HepG2 (cell line): ENCODE measurements at regions of chr7 and their contacts with region 1.

Region 1: GRCh38 chr7:87345166-87345927 is at the start of gene CROT:
- DNase-seq: peak; percentile 91
- ATAC-seq: peak; percentile 99
- H3K4me3 ChIP-seq: peak within 1 kb of the TSS; percentile 79 to 85 (median 81)
- H3K27ac ChIP-seq: peak within 1 kb of the TSS; percentile 73
- H3K4me1 ChIP-seq: peaks cover 44% of the 10 kb centered on the region
- H3K27me3 ChIP-seq: no peaks in the 10 kb centered on the region; a peak in 1 of 5 replicates
- CTCF ChIP-seq: no peak
- EP300 ChIP-seq: no peak
- POLR2A ChIP-seq: peak; percentile 71 to 90
- RAD21 ChIP-seq: no peak; the same call in 1 of the 2 replicates
- total RNA-seq, gene CROT: 11.9 and 13.7 TPM in 2 replicates

Region 2: GRCh38 chr7:86469680-86470295 is 875.6 kb before region 1 on chr7:
- CTCF ChIA-PET with region 1: no interaction called
- POLR2A ChIA-PET with region 1: no interaction called
- in situ Hi-C with region 1: no loop called
- intact Hi-C with region 1: no loop called
- DNase-seq: peak; percentile 70
- ATAC-seq: peak; percentile 95
- H3K4me3 ChIP-seq: no peak overlapping the region
- H3K27ac ChIP-seq: no peak overlapping the region
- H3K4me1 ChIP-seq: no peaks in the 10 kb centered on the region
- H3K27me3 ChIP-seq: no peaks in the 10 kb centered on the region
- CTCF ChIP-seq: peak; percentile 87
- EP300 ChIP-seq: no peak
- POLR2A ChIP-seq: no peak
- RAD21 ChIP-seq: peak; percentile 63

Region 3: DNA sequence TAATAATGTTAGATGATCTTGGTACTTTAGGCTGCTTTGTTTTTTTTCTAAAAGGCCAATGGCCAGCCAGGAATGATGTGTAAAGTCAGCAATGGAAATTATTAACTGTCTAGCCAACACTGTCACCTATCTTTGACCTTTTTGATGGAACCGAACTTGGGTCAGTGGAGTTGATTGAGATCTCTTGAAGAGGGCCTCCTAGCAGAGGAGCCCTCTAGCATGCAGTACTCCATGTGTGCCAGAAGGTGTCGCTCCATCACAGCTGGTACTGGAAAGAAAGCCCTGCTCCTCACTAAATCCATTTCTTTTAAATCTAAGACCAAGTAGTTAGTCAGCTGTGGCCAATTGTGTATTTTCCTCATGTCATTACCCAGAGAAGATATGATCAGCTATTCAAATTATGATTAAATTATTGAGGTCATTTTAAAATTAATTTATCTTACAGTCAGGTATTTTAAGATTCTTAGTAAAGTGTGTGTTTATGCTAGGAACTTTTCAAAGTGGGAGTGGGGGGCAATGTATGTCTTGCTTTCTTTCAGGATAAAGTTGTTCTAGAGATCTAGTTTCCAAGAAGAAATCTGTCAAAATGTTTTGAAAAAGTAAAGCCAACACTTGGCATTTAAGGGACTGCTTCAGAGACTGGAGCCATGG is 33.0 kb before region 1 on chr7:
- CTCF ChIA-PET with region 1: no interaction called
- POLR2A ChIA-PET with region 1: interaction called, 6 read pairs
- in situ Hi-C with region 1: no loop called
- intact Hi-C with region 1: loop called (anchors 2 kb)
- DNase-seq: peak; percentile 56
- ATAC-seq: peak; percentile 84
- H3K4me3 ChIP-seq: no peak overlapping the region
- H3K27ac ChIP-seq: no peak overlapping the region
- H3K4me1 ChIP-seq: peaks cover 42% of the 10 kb centered on the region
- H3K27me3 ChIP-seq: no peaks in the 10 kb centered on the region
- CTCF ChIP-seq: peak; percentile 95
- EP300 ChIP-seq: no peak
- POLR2A ChIP-seq: no peak
- RAD21 ChIP-seq: peak; percentile 92

Region 4: GRCh38 chr7:87318741-87319140 is 26.6 kb before region 1 on chr7:
- CTCF ChIA-PET with region 1: no interaction called
- POLR2A ChIA-PET with region 1: interaction called, 15 read pairs
- in situ Hi-C with region 1: no loop called
- intact Hi-C with region 1: loop called (anchors 2 kb)
- DNase-seq: peak; percentile 33
- ATAC-seq: peak; percentile 91
- H3K4me3 ChIP-seq: peak overlapping the region; percentile 48 to 70 (median 55); a peak in 5 of 6 replicates
- H3K27ac ChIP-seq: no peak overlapping the region
- H3K4me1 ChIP-seq: peaks cover 38% of the 10 kb centered on the region
- H3K27me3 ChIP-seq: no peaks in the 10 kb centered on the region
- CTCF ChIP-seq: peak; percentile 61
- EP300 ChIP-seq: no peak
- POLR2A ChIP-seq: no peak
- RAD21 ChIP-seq: 0 out of 2 replicates have a peak, but pooled peaks have one; percentile 27

Region 5: DNA sequence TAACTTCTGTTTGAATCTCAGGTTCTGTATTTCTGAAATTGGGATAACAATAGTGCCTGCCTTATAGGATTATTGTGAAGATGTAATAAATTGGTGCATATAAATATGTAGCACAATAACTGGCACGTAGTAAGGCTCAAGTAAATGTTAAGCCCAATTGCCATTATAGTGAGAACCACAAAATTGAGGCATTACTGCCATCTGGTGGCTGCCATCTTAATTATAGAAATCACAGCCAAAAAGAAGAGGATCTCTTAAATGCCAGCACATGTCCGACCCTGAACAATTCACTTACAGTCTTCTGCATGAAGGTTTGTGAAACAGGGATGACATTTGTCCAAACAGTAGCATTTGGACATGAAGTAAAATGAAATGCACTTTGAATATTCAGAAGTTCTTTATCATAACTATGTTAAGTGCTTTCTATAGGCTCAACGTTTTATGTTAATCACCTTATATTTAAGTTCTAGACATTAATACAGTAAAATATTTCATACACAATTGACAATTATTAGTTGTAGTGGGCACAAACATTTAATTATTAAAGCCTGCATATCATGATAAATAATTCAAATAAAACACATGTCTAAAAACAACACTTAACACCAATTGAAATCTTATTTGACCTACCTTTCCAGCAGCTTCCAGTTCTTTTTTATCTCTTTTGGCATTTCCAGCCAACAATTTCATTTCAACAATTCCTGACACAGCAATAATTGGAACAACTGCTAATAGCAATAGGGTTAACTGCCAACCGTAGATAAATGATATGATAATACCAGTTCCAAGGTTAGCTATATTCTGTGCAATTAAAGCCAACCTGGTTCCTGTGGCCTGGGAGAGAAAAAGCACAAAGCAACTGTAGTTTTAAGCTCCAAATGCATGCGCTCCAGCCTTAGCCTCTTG is 71.6 kb after region 1 on chr7:
- CTCF ChIA-PET with region 1: no interaction called
- POLR2A ChIA-PET with region 1: no interaction called
- in situ Hi-C with region 1: no loop called
- intact Hi-C with region 1: loop called (anchors 2 kb)
- DNase-seq: peak; percentile 59
- ATAC-seq: peak; percentile 77
- H3K4me3 ChIP-seq: no peak overlapping the region
- H3K27ac ChIP-seq: no peak overlapping the region
- H3K4me1 ChIP-seq: peaks cover 11% of the 10 kb centered on the region
- H3K27me3 ChIP-seq: no peaks in the 10 kb centered on the region
- CTCF ChIP-seq: peak; percentile 85
- EP300 ChIP-seq: no peak
- POLR2A ChIP-seq: no peak
- RAD21 ChIP-seq: peak; percentile 73

Region 6: DNA sequence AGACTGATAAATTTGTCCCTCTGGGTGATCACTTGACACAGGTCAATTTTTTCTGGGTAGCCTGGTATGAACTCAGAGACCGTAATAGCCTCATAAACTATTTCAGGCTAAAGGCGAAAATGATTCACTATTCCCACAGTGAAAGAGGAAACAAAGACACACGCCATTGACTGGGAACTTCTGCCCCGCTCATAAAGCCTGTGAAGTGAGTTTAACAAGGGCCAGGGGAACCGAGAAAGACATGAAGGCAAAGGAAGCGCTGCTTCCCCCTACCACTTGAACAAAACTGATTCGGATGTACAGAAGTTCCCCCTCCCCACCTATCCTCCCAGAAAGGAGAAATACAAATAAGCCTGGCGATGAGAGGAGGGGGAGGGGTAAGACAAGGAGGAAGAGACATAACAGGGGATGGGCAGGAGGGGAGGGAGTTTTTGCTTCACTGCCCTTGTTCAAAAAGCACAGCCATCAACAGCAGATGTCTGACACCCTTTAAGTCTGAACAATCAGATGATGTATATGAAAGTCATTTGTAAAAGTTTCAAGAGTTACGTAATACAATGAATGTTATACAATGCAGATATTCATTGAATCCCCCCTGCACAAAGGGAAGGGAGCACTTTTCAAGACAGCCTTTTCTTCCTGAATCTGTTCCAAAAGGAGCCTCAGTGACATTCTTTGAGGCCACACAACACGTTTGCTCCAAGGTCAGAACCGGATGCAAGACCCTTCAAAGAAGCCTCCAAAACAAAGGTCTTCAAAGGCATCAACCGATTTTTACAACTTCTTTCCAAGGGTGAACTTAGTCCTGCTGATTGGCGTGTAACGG is 129.4 kb after region 1 on chr7:
- CTCF ChIA-PET with region 1: no interaction called
- POLR2A ChIA-PET with region 1: no interaction called
- in situ Hi-C with region 1: no loop called
- intact Hi-C with region 1: loop called (anchors 10 kb)
- DNase-seq: no peak
- ATAC-seq: peak; percentile 16; the same call in 2 of the 3 replicates
- H3K4me3 ChIP-seq: peak overlapping the region; percentile 70 to 81 (median 74)
- H3K27ac ChIP-seq: peak overlapping the region; percentile 74
- H3K4me1 ChIP-seq: peaks cover 62% of the 10 kb centered on the region
- H3K27me3 ChIP-seq: no peaks in the 10 kb centered on the region; a peak in 1 of 5 replicates
- CTCF ChIP-seq: no peak
- EP300 ChIP-seq: no peak
- POLR2A ChIP-seq: no peak
- RAD21 ChIP-seq: no peak

Region 7: GRCh38 chr7:87876040-87876868 is 530.9 kb after region 1 on chr7 and contains the starts of genes DBF4 and SLC25A40:
- CTCF ChIA-PET with region 1: no interaction called
- POLR2A ChIA-PET with region 1: no interaction called
- in situ Hi-C with region 1: loop called (anchors 10 kb)
- intact Hi-C with region 1: loop called (anchors 10 kb)
- DNase-seq: peak; percentile 93
- ATAC-seq: peak; percentile 97
- H3K4me3 ChIP-seq: peak within 1 kb of the TSS; percentile 86 to 92 (median 92)
- H3K27ac ChIP-seq: peak within 1 kb of the TSS; percentile 97
- H3K4me1 ChIP-seq: peaks cover 53% of the 10 kb centered on the region
- H3K27me3 ChIP-seq: no peaks in the 10 kb centered on the region; a peak in 1 of 5 replicates
- CTCF ChIP-seq: no peak
- EP300 ChIP-seq: peak in 1 of 2 experiments; percentile 35; a peak in 1 of 4 replicates
- POLR2A ChIP-seq: peak; percentile 68 to 75
- RAD21 ChIP-seq: no peak; the same call in 1 of the 2 replicates
- total RNA-seq, gene DBF4: 64.4 and 90.0 TPM in 2 replicates
- total RNA-seq, gene SLC25A40: 13.6 and 18.0 TPM in 2 replicates